ENCODE measurements at regions of chr14 and their contacts with region 1.

Region 1: DNA sequence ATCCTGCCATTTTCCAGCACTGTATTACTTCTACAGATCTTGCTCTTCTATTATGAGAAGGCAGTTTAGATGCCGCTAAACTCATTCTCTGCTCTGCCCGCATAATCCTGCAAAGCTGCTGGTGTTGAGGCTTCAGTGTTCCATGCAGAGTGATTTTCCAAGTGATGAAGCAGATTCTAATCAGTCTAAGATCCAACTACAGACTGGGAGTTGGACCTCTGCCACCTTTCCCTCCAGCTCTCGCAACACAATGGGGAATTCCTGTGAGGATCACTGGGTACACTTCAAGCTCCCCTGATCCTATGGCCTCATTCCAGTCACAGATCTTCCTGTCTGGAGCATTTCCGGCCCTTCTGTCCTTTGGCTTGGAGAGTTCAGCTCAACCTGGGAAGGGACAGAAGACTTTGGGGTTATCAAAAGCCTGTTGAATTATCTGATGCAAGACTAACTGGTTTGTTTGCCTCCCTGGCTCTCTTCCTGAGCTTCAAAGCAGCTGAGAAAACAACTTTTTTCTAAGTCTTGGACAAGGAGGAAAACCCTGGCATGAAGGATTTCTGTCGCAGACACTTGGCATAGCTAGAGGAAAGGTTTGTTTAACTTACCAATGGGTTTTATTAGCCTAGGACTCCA is 333.9 kb downstream of the ZFP36L1 start:
- DNase-seq: peak; percentile 85 to 97
- H3K4me3 ChIP-seq: peak overlapping the region; percentile 25; the same call in 1 of the 2 replicates
- H3K27ac ChIP-seq: peak overlapping the region; percentile 93
- H3K4me1 ChIP-seq: peaks cover 77% of the 10 kb centered on the region
- H3K27me3 ChIP-seq: no peaks in the 10 kb centered on the region
- CTCF ChIP-seq: no peak

Region 2: GRCh38 chr14:67963960-67964744 is 494.8 kb before region 1 on chr14:
- CTCF ChIA-PET with region 1: no interaction called
- POLR2A ChIA-PET with region 1: no interaction called
- intact Hi-C with region 1: loop called (anchors 1 kb)
- DNase-seq: peak; percentile 44 to 95
- H3K4me3 ChIP-seq: peak overlapping the region; percentile 34; the same call in 1 of the 2 replicates
- H3K27ac ChIP-seq: peak overlapping the region; percentile 77
- H3K4me1 ChIP-seq: peaks cover 38% of the 10 kb centered on the region
- H3K27me3 ChIP-seq: no peaks in the 10 kb centered on the region
- CTCF ChIP-seq: no peak

Region 3: GRCh38 chr14:68307014-68307789 is 151.8 kb before region 1 on chr14:
- CTCF ChIA-PET with region 1: interaction called, 6 read pairs
- POLR2A ChIA-PET with region 1: no interaction called
- intact Hi-C with region 1: loop called (anchors 2 kb)
- DNase-seq: peak; percentile 73 to 99
- H3K4me3 ChIP-seq: peak overlapping the region; percentile 22; the same call in 1 of the 2 replicates
- H3K27ac ChIP-seq: peak overlapping the region; percentile 95
- H3K4me1 ChIP-seq: peaks cover 62% of the 10 kb centered on the region
- H3K27me3 ChIP-seq: no peaks in the 10 kb centered on the region
- CTCF ChIP-seq: no peak

Region 4: GRCh38 chr14:68333262-68333661 is 125.7 kb before region 1 on chr14:
- CTCF ChIA-PET with region 1: no interaction called
- POLR2A ChIA-PET with region 1: no interaction called
- intact Hi-C with region 1: no loop called
- DNase-seq: no peak
- H3K4me3 ChIP-seq: no peak overlapping the region
- H3K27ac ChIP-seq: no peak overlapping the region
- H3K4me1 ChIP-seq: no peaks in the 10 kb centered on the region
- H3K27me3 ChIP-seq: no peaks in the 10 kb centered on the region
- CTCF ChIP-seq: no peak

Region 5: GRCh38 chr14:68526420-68527105 is 67.6 kb after region 1 on chr14:
- CTCF ChIA-PET with region 1: no interaction called
- POLR2A ChIA-PET with region 1: no interaction called
- intact Hi-C with region 1: loop called (anchors 2 kb)
- DNase-seq: peak; percentile 71 to 74
- H3K4me3 ChIP-seq: no peak overlapping the region
- H3K27ac ChIP-seq: peak overlapping the region; percentile 87
- H3K4me1 ChIP-seq: peaks cover 45% of the 10 kb centered on the region
- H3K27me3 ChIP-seq: no peaks in the 10 kb centered on the region
- CTCF ChIP-seq: no peak

Region 6: GRCh38 chr14:68627880-68628607 is 169.1 kb after region 1 on chr14:
- CTCF ChIA-PET with region 1: no interaction called
- POLR2A ChIA-PET with region 1: interaction called, 3 read pairs
- intact Hi-C with region 1: loop called (anchors 2 kb)
- DNase-seq: peak; percentile 72 to 81
- H3K4me3 ChIP-seq: peak overlapping the region; percentile 60
- H3K27ac ChIP-seq: peak overlapping the region; percentile 92
- H3K4me1 ChIP-seq: peaks cover 45% of the 10 kb centered on the region
- H3K27me3 ChIP-seq: no peaks in the 10 kb centered on the region
- CTCF ChIP-seq: no peak

Measured in PC-9 (cell line).